GM12878 (cell line): ENCODE measurements at regions of chr2 and their contacts with region 1.

Region 1: GRCh38 chr2:38581193-38582147 is 21.3 kb downstream of the HNRNPLL start:
- DNase-seq: peak; percentile 23
- ATAC-seq: peak; percentile 92
- H3K4me3 ChIP-seq: no peak overlapping the region
- H3K27ac ChIP-seq: no peak overlapping the region
- H3K4me1 ChIP-seq: no peaks in the 10 kb centered on the region
- H3K27me3 ChIP-seq: no peaks in the 10 kb centered on the region
- CTCF ChIP-seq: peak; percentile 47 to 73 (median 60); a peak in 5 of 6 replicates
- EP300 ChIP-seq: no peak
- POLR2A ChIP-seq: no peak
- RAD21 ChIP-seq: peak; percentile 88

Region 2: DNA sequence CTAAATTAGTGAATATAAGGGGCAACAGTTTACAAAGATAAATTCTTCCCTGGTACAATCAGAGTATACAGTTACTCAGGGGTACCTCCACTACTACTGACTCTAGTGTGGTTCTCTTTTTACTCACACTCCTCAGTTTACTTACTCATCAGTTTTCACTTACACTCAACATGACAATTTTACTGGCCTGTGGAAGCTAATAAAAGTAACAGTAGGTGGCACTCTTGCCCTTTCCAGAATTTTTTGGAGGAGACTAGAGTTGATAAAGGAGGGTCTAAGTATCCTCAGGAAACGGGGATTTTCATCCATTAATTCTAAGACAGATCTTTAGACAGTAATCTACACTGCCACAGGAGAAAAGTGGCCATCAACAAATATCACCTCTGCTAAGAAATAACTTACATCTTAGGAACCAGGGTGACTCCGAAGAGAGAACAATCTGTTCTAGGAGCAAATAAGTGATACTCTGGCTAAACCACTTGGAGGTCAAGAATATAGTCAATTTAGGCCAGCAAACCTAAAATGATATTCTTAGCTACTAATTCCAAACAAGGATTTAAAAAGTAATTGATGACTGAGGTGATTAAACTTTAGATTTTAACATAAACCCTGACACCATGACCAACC is 265.6 kb before region 1 on chr2:
- CTCF ChIA-PET with region 1: interaction called, 27 read pairs
- POLR2A ChIA-PET with region 1: no interaction called
- RAD21 ChIA-PET with region 1: interaction called, 6 read pairs
- SMC1A ChIA-PET with region 1: interaction called, 6 read pairs
- in situ Hi-C with region 1: no loop called
- intact Hi-C with region 1: no loop called
- DNase-seq: peak; percentile 11
- ATAC-seq: peak; percentile 76
- H3K4me3 ChIP-seq: no peak overlapping the region
- H3K27ac ChIP-seq: no peak overlapping the region
- H3K4me1 ChIP-seq: no peaks in the 10 kb centered on the region
- H3K27me3 ChIP-seq: no peaks in the 10 kb centered on the region
- CTCF ChIP-seq: peak; percentile 57 to 66 (median 66)
- EP300 ChIP-seq: no peak
- POLR2A ChIP-seq: no peak
- RAD21 ChIP-seq: peak; percentile 90

Region 3: GRCh38 chr2:38561691-38562090 is 19.8 kb before region 1 on chr2:
- CTCF ChIA-PET with region 1: interaction called, 58 read pairs
- POLR2A ChIA-PET with region 1: interaction called, 4 read pairs
- RAD21 ChIA-PET with region 1: interaction called, 17 read pairs
- SMC1A ChIA-PET with region 1: interaction called, 32 read pairs
- in situ Hi-C with region 1: no loop called
- intact Hi-C with region 1: no loop called
- DNase-seq: no peak
- ATAC-seq: no peak
- H3K4me3 ChIP-seq: no peak overlapping the region
- H3K27ac ChIP-seq: no peak overlapping the region
- H3K4me1 ChIP-seq: no peaks in the 10 kb centered on the region
- H3K27me3 ChIP-seq: no peaks in the 10 kb centered on the region
- CTCF ChIP-seq: no peak
- EP300 ChIP-seq: no peak
- POLR2A ChIP-seq: no peak
- RAD21 ChIP-seq: no peak

Region 4: DNA sequence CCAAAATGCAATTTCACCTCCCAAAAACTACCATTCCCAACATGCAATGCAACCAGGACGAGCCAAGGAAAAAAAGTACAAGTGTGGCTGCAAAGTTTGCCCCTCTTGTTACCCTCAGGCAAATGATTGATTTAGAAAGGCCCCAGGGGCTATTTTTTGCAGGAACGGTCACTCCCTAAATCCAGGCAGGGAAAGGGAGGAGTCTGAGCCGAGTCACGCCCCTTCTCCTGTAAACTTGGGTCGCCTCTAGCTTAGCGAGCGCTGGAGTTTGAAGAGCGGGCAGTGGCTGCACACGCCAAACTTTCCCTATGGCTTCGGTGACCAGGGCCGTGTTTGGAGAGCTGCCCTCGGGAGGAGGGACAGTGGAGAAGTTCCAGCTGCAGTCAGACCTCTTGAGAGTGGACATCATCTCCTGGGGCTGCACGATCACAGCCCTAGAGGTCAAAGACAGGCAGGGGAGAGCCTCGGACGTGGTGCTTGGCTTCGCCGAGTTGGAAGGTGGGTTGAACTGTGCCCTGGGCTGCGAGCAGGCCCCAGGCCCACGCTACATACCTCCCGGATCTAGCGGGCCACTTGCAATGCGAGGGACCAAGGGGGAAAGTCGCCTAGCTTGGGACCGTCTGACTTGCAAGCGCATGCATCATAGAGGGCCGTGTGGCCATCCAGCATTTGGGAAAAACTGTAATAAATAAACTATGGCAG is 84.5 kb after region 1 on chr2 and contains the start of gene GALM:
- CTCF ChIA-PET with region 1: interaction called, 19 read pairs
- POLR2A ChIA-PET with region 1: no interaction called
- RAD21 ChIA-PET with region 1: no interaction called
- SMC1A ChIA-PET with region 1: interaction called, 6 read pairs
- in situ Hi-C with region 1: no loop called
- intact Hi-C with region 1: no loop called
- DNase-seq: no peak
- ATAC-seq: peak; percentile 55
- H3K4me3 ChIP-seq: peak within 1 kb of the TSS; percentile 56; the same call in 1 of the 2 replicates
- H3K27ac ChIP-seq: peak within 1 kb of the TSS; percentile 33; the same call in 1 of the 2 replicates
- H3K4me1 ChIP-seq: peaks cover 28% of the 10 kb centered on the region
- H3K27me3 ChIP-seq: no peaks in the 10 kb centered on the region
- CTCF ChIP-seq: no peak
- EP300 ChIP-seq: no peak
- POLR2A ChIP-seq: no peak
- RAD21 ChIP-seq: no peak
- polyA plus RNA-seq, gene GALM: 1.5 to 1.7 TPM

Region 5: GRCh38 chr2:38728694-38729093 is 147.2 kb after region 1 on chr2:
- CTCF ChIA-PET with region 1: interaction called, 370 read pairs
- POLR2A ChIA-PET with region 1: interaction called, 3 read pairs
- RAD21 ChIA-PET with region 1: interaction called, 134 read pairs
- SMC1A ChIA-PET with region 1: interaction called, 201 read pairs
- in situ Hi-C with region 1: loop called (anchors 5 kb)
- intact Hi-C with region 1: loop called (anchors 1 kb)
- DNase-seq: no peak
- ATAC-seq: no peak
- H3K4me3 ChIP-seq: no peak overlapping the region
- H3K27ac ChIP-seq: no peak overlapping the region
- H3K4me1 ChIP-seq: peaks cover 2% of the 10 kb centered on the region; the same call in 1 of the 2 replicates
- H3K27me3 ChIP-seq: no peaks in the 10 kb centered on the region
- CTCF ChIP-seq: no peak
- EP300 ChIP-seq: no peak
- POLR2A ChIP-seq: no peak
- RAD21 ChIP-seq: no peak

Region 6: DNA sequence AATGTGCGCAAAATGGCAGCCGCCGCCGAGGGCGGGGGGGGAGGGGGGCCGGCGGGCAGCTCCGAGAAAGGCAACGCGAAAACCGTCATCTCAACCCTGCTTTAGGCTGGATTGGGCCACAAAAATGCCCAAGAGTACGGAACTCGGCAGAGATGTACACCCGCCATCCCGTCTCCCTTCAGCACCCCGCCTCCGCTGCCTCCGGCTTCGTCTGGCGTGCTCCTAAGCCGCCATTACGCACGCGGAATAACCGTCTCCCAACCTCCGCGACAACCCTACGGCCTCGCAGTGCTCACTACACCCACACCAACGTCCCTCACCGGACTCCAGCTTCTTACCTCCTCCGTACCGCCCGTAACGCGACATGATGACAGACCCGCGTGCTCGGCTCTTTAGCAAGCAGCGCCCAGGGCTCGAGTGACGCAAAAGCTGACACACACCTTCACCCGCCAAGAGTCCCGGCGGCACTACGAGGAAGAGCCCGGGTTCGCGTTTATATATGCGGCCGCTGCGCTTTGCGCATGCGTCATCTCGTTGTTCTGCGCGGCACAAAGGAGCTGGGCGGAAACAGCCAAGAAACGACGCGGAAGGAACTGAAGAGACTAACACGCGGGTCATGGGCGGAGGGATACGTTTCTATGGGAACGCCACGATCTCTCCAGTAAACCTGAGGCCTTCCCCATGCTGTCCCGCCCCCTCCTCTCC is 169.6 kb after region 1 on chr2 and contains the start of gene SRSF7:
- CTCF ChIA-PET with region 1: interaction called, 162 read pairs
- POLR2A ChIA-PET with region 1: interaction called, 12 read pairs
- RAD21 ChIA-PET with region 1: interaction called, 18 read pairs
- SMC1A ChIA-PET with region 1: interaction called, 15 read pairs
- in situ Hi-C with region 1: no loop called
- intact Hi-C with region 1: no loop called
- DNase-seq: peak; percentile 93
- ATAC-seq: peak; percentile 84
- H3K4me3 ChIP-seq: peak within 1 kb of the TSS; percentile 95
- H3K27ac ChIP-seq: peak within 1 kb of the TSS; percentile 97
- H3K4me1 ChIP-seq: no peaks in the 10 kb centered on the region; the same call in 1 of the 2 replicates
- H3K27me3 ChIP-seq: no peaks in the 10 kb centered on the region
- CTCF ChIP-seq: no peak
- EP300 ChIP-seq: peak in 1 of 2 experiments; percentile 76; a peak in 2 of 4 replicates
- POLR2A ChIP-seq: peak; percentile 100
- RAD21 ChIP-seq: no peak
- polyA plus RNA-seq, gene SRSF7: 753 to 785 TPM